MCF 10A (cell line): ENCODE measurements at regions of chr2 and their contacts with region 1.

Region 1: GRCh38 chr2:130807659-130808385 is 28.9 kb upstream of the ARHGEF4 start:
- DNase-seq: peak; percentile 97
- H3K4me3 Mint-ChIP-seq: peak overlapping the region; percentile 66
- H3K27ac Mint-ChIP-seq: peak overlapping the region; percentile 96
- H3K4me1 Mint-ChIP-seq: peaks cover 39% of the 10 kb centered on the region
- H3K27me3 Mint-ChIP-seq: no peaks in the 10 kb centered on the region
- CTCF ChIP-seq: no peak

Region 2: GRCh38 chr2:130824492-130825061 is 16.8 kb after region 1 on chr2:
- CTCF ChIA-PET with region 1: interaction called, 6 read pairs
- POLR2A ChIA-PET with region 1: interaction called, 95 read pairs
- intact Hi-C with region 1: loop called (anchors 1 kb)
- DNase-seq: peak; percentile 98
- H3K4me3 Mint-ChIP-seq: peak overlapping the region; percentile 31
- H3K27ac Mint-ChIP-seq: peak overlapping the region; percentile 96
- H3K4me1 Mint-ChIP-seq: peaks cover 60% of the 10 kb centered on the region
- H3K27me3 Mint-ChIP-seq: no peaks in the 10 kb centered on the region
- CTCF ChIP-seq: no peak

Region 3: GRCh38 chr2:130836501-130837174 is 28.8 kb after region 1 on chr2 and contains the start of gene ARHGEF4:
- CTCF ChIA-PET with region 1: interaction called, 6 read pairs
- POLR2A ChIA-PET with region 1: interaction called, 39 read pairs
- intact Hi-C with region 1: loop called (anchors 1 kb)
- DNase-seq: peak; percentile 68
- H3K4me3 Mint-ChIP-seq: peak within 1 kb of the TSS; percentile 71
- H3K27ac Mint-ChIP-seq: no peak within 1 kb of the TSS
- H3K4me1 Mint-ChIP-seq: peaks cover 26% of the 10 kb centered on the region
- H3K27me3 Mint-ChIP-seq: no peaks in the 10 kb centered on the region
- CTCF ChIP-seq: no peak
- total RNA-seq, gene ARHGEF4: 52.0 and 59.3 TPM in 2 replicates

Region 4: GRCh38 chr2:130864830-130865800 is 57.3 kb after region 1 on chr2:
- CTCF ChIA-PET with region 1: interaction called, 5 read pairs
- POLR2A ChIA-PET with region 1: interaction called, 17 read pairs
- intact Hi-C with region 1: no loop called
- DNase-seq: peak; percentile 99
- H3K4me3 Mint-ChIP-seq: peak overlapping the region; percentile 8
- H3K27ac Mint-ChIP-seq: peak overlapping the region; percentile 89
- H3K4me1 Mint-ChIP-seq: peaks cover 37% of the 10 kb centered on the region
- H3K27me3 Mint-ChIP-seq: no peaks in the 10 kb centered on the region
- CTCF ChIP-seq: no peak

Region 5: DNA sequence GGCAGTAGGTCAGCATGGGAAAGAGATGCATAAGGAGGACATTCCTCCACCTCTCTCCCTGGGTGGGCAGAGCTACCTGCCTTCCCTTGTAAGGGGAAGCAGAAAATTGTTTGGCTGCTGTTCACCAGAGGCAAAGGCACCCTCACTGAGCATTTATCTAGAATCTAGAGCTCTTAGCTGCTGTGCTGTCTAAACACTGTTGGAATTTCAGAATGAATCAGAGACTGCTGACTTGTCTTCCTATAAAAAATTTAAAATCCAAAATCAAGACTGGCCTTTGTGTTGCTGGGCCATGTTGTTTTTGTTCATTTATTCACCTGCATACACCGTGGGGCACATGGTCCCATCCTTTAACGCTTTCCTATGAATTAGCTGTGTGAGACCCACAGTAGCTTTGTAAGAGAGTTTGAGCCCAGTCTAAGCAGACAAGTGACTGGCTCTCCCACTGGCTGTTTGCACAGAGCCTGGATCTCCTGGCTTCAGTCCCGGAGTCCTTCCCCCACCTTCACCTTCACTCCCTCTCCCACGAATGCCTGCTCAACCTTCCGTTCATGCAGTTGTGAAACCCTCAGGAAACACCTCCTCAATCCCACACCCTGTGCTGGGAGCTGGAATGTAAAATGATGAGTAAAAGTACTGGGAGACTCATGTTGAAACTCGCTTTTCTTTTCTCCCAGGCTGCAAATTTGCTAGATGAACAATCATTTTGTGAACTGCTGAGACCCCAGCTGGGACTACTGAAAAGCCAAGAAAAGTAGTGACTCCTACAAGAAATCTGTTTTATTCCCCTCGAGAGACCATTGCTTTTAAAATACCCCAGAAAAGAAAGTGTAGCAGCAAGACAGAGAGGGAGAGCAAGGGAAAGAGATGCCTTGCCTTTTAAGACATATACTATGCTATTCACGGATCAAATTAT is 209.3 kb after region 1 on chr2:
- CTCF ChIA-PET with region 1: interaction called, 3 read pairs
- POLR2A ChIA-PET with region 1: interaction called, 15 read pairs
- intact Hi-C with region 1: no loop called
- DNase-seq: peak; percentile 99
- H3K4me3 Mint-ChIP-seq: peak overlapping the region; percentile 71
- H3K27ac Mint-ChIP-seq: peak overlapping the region; percentile 97
- H3K4me1 Mint-ChIP-seq: peaks cover 35% of the 10 kb centered on the region
- H3K27me3 Mint-ChIP-seq: no peaks in the 10 kb centered on the region
- CTCF ChIP-seq: no peak

Region 6: GRCh38 chr2:131105156-131105949 is 297.5 kb after region 1 on chr2 and contains the start of gene PLEKHB2:
- CTCF ChIA-PET with region 1: no interaction called
- POLR2A ChIA-PET with region 1: interaction called, 10 read pairs
- intact Hi-C with region 1: no loop called
- DNase-seq: peak; percentile 87
- H3K4me3 Mint-ChIP-seq: peak within 1 kb of the TSS; percentile 87
- H3K27ac Mint-ChIP-seq: peak within 1 kb of the TSS; percentile 92
- H3K4me1 Mint-ChIP-seq: peaks cover 15% of the 10 kb centered on the region
- H3K27me3 Mint-ChIP-seq: no peaks in the 10 kb centered on the region
- CTCF ChIP-seq: no peak
- total RNA-seq, gene PLEKHB2: 57.6 and 78.1 TPM in 2 replicates